ENCODE measurements at regions of chr12 and their contacts with region 1.

Region 1: DNA sequence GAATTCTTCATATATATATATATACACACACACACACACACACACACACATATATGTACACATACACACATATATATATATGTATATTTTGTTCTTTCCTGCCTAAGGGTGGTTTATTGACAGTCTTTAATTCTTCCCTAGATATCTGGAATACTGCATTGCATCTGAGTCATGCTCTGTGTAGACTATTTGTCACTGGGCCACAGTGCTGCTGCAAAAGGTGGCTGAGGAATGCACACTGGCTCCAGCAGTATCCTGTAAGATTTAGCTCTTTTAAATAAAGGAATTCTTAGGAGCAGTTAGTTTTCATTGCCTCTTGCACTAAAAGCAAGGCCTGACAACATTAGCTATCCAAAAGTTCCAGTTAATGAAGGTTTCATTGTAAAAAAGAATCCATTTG is 200.9 kb downstream of the APAF1 start:
- DNase-seq: no peak
- ATAC-seq: no peak

Region 2: GRCh38 chr12:98948343-98948949 is 102.5 kb after region 1 on chr12:
- intact Hi-C with region 1: loop called (anchors 5 kb)
- DNase-seq: no peak
- ATAC-seq: no peak

Measured in Right ventricle myocardium inferior (tissue), 1 donor.